Cardiac septum (tissue), 1 donor: ENCODE measurements at regions of chr10 and their contacts with region 1.

Region 1: GRCh38 chr10:31770307-31770902 is 158.2 kb downstream of the ARHGAP12 start:
- DNase-seq: no peak

Region 2: GRCh38 chr10:31274310-31274709 is 496.1 kb before region 1 on chr10:
- intact Hi-C with region 1: no loop called
- DNase-seq: no peak

Region 3: GRCh38 chr10:31526681-31527080 is 243.7 kb before region 1 on chr10:
- intact Hi-C with region 1: loop called (anchors 10 kb)
- DNase-seq: no peak

Region 4: DNA sequence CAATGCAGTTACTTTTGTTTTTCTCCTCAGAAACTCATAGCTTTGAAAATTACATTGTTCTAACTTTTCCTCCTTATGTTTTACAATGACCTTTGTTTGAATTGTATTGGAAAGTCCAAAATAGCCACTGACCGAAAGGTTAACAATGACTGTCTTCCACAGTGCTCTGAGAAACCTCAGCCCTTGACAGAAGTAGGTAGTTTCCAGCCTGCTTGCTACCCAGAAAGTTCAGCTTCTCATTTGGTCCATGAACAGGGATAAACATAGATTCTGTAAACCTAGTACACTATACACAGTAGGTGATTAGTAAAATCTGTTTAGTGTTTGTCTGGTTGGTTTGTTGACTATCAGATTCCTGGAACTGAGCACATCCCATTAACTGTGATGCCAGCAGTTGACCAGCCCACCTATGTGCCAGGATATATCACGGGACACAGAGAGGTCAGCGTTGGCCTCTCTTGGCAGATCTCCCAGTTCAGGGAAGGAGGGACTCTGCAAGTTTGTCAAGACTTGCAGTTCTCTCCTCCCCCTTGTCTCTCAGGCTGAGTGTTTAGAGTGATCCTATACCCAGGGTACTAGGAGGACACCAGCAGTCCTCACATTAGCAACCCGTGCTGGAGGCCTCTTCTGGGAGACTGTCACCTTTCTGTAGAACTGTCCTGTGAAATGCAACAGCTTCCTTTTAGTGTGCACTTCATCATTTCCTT is 139.4 kb before region 1 on chr10:
- intact Hi-C with region 1: no loop called
- DNase-seq: no peak

Region 5: DNA sequence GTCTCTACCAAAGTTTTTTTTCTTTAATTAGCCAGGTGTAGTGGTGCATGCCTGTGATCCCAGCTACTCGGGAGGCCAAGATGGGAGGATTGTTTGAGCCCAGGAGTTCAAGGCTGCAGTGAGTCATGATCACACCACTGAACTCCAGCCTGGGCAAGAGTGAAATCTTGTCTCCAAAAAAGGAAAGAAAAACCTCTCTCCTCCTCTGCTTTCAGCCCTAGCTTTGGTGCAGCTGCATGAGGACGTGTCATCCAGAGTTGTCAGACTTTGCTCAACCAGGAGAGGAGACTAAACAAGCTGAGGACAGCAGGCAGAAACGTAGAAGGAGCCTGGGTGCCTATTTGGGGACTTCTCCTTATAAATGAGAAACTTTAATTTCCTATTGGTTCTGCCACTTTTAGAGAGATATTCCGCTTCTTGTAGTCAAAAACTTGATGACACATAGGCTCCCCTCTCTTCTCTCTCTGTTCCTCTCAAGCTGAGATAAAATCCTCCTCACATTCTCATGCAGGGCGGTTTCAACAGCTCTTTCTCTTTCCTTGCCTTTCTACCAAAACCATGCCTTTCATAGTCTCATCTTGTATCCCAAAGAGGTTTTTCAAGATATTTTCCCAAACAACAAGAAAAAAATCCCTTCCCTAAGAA is 47.2 kb before region 1 on chr10:
- intact Hi-C with region 1: no loop called
- DNase-seq: no peak

Region 6: DNA sequence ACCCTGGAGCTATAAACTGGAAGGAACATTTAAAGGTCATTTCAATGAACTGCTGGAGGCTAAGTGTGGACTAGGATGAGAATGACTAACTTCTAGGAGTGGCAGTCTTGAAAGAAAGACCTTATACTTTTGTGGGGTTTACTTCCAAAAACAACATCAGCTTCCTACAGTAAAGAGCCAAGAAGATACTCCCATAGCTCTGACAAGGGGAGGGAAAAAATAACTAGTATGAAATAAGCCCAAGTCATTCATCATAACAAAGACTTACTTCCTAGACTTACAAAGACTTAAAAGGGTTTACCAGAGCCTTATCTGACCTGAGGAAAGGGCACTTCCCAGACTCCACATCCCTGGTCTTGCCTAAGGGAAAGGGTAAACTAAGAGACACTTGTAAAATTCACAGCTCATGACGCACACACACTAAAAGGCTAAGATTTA is 126.6 kb after region 1 on chr10:
- intact Hi-C with region 1: no loop called
- DNase-seq: no peak